Activated CD4-positive, alpha-beta T cell treated with anti-CD3 and anti-CD28 coated beads for 36 hours (primary cell): ENCODE measurements at regions of chr19 and their contacts with region 1.

Region 1: DNA sequence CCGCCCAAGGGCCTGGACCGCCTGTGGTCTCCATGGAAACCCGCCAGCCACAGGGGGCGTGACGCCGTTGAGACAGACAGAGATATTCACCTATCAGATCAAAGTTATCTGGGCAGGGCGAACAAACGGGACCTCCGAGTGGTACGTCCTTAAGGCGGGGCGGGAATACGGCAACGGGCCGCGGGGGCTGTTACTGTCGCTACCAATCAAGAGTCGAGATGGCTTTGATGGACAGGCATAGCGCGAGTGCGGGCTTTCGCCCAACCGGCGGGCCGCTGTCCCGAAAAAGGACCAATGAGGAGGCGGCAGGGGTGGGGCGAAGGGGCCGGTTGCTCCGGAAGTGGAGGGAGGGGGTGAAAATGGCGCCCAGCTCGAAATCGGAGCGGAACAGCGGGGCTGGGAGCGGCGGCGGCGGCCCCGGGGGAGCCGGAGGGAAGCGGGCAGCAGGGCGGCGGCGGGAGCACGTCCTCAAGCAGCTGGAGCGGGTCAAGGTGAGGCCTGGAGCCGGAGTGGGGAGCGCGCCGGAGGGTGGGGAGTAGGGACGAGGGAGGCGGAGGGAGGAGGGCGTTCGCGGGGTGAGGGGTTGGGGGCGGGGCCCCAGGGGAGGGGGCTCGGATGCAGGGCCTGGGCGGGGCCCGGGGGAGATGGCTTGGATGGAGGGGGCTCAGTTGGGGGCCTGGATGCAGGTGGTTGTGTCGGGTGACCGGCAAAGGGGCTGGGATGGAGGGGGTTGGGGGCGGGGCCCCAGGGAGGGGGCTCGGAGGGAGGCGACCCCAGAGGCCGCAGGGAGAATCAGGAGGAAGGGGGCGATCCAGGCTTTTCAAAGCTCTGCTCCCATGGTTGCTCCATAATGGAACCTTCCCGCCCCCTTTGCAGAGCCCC is at the start of gene DCAF15:
- DNase-seq: peak; percentile 100
- ATAC-seq: peak; percentile 99
- H3K4me3 Mint-ChIP-seq: peak within 1 kb of the TSS; percentile 88
- H3K27ac Mint-ChIP-seq: peak within 1 kb of the TSS; percentile 81
- H3K4me1 Mint-ChIP-seq: peaks cover 16% of the 10 kb centered on the region
- H3K27me3 Mint-ChIP-seq: no peaks in the 10 kb centered on the region
- total RNA-seq, gene DCAF15: 55.8 to 61.6 TPM

Region 2: GRCh38 chr19:13731147-13731964 is 221.0 kb before region 1 on chr19:
- CTCF ChIA-PET with region 1: no interaction called
- POLR2A ChIA-PET with region 1: no interaction called
- intact Hi-C with region 1: loop called in 1 of 2 experiments (anchors 1 kb)
- DNase-seq: peak; percentile 97
- ATAC-seq: peak; percentile 99
- H3K4me3 Mint-ChIP-seq: peak overlapping the region; percentile 87
- H3K27ac Mint-ChIP-seq: peak overlapping the region; percentile 94
- H3K4me1 Mint-ChIP-seq: peaks cover 25% of the 10 kb centered on the region
- H3K27me3 Mint-ChIP-seq: no peaks in the 10 kb centered on the region

Region 3: GRCh38 chr19:13880059-13881043 is 72.0 kb before region 1 on chr19:
- CTCF ChIA-PET with region 1: no interaction called
- POLR2A ChIA-PET with region 1: no interaction called
- intact Hi-C with region 1: loop called (anchors 1 to 5 kb)
- DNase-seq: peak; percentile 99
- ATAC-seq: peak; percentile 94
- H3K4me3 Mint-ChIP-seq: peak overlapping the region; percentile 49
- H3K27ac Mint-ChIP-seq: peak overlapping the region; percentile 85
- H3K4me1 Mint-ChIP-seq: peaks cover 35% of the 10 kb centered on the region
- H3K27me3 Mint-ChIP-seq: no peaks in the 10 kb centered on the region

Region 4: GRCh38 chr19:13986348-13986904 is 34.0 kb after region 1 on chr19:
- CTCF ChIA-PET with region 1: interaction called, 3 read pairs
- POLR2A ChIA-PET with region 1: no interaction called
- intact Hi-C with region 1: loop called (anchors 1 to 5 kb)
- DNase-seq: peak; percentile 100
- ATAC-seq: peak; percentile 92
- H3K4me3 Mint-ChIP-seq: peak overlapping the region; percentile 63
- H3K27ac Mint-ChIP-seq: peak overlapping the region; percentile 97
- H3K4me1 Mint-ChIP-seq: peaks cover 65% of the 10 kb centered on the region
- H3K27me3 Mint-ChIP-seq: no peaks in the 10 kb centered on the region

Region 5: DNA sequence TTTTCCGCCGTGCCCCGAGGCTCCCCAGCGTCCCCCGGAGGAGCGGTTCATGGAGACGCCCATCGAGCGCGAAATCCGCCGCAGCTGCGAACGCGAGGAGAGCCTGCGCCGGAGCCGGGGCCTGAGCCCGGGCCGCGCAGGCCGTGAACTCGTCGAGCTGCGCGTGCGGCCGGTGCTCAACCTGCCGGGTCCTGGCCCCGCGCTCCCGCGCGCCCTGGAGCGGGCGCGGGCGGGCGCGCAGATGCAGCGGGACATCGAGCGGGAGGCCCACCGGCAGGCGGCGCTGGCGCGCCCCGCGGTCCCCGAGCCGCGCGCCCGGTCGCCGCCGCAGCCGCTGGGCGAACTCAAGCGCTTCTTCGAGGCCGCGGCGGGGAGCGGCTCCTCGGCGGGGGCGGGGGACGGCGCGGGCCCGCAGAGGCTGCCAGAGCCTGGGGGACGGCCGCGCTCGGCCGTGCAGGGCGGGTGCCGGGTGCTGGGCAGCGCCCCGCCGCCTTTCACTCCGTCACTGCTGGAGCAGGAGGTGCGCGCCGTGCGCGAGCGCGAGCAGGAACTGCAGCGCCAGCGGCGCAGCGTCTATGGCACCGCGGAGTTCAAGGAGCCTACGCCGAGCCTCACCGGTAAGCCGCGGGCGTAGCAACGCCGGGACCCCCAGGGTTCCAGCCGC is 121.0 kb after region 1 on chr19:
- CTCF ChIA-PET with region 1: interaction called, 4 read pairs
- POLR2A ChIA-PET with region 1: no interaction called
- intact Hi-C with region 1: loop called in 1 of 2 experiments (anchors 1 kb)
- DNase-seq: peak; percentile 87
- ATAC-seq: peak; percentile 74
- H3K4me3 Mint-ChIP-seq: peak overlapping the region; percentile 87
- H3K27ac Mint-ChIP-seq: peak overlapping the region; percentile 80
- H3K4me1 Mint-ChIP-seq: peaks cover 21% of the 10 kb centered on the region
- H3K27me3 Mint-ChIP-seq: peaks cover 2% of the 10 kb centered on the region

Region 6: DNA sequence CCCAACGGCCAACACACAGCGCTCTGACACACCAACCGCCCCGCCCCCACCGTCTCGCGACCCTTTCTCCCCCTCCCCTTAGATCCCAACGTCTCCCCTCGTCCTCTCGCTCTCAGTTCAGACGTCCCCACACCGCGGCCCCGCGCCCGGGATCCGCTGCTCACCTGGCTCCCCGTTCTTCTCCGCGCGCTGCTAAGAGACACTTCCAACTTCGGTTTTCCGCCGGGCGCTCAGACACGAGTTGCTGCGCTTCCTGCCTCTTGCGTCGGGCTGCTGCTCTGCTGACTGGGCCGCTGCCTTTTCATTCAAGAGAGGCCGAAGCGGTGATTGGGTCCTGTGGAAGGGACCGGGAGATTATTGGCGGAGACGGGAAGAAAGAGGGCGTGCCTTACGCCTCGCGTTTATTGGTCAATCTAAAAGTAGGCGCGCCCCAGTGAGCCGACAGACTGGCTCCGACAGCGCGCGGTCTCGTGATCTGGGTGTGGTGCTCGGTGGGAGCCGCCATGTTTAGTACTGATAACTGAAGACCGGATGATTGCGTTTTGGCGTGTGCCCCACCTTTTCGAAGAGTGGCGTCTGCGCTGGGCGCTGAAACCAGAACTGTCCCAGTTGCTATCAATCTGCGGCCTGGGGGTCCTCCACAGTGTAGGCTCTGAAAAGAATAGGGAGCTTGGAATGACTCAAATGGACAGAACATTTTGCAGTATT is 466.9 kb after region 1 on chr19 and contains the start of gene DDX39A:
- CTCF ChIA-PET with region 1: no interaction called
- POLR2A ChIA-PET with region 1: no interaction called
- intact Hi-C with region 1: loop called in 1 of 2 experiments (anchors 1 kb)
- DNase-seq: peak; percentile 99
- ATAC-seq: peak; percentile 95
- H3K4me3 Mint-ChIP-seq: peak within 1 kb of the TSS; percentile 82
- H3K27ac Mint-ChIP-seq: peak within 1 kb of the TSS; percentile 92
- H3K4me1 Mint-ChIP-seq: peaks cover 29% of the 10 kb centered on the region
- H3K27me3 Mint-ChIP-seq: no peaks in the 10 kb centered on the region
- total RNA-seq, gene DDX39A: 168 to 185 TPM